ENCODE measurements at regions of chr5 and their contacts with region 1.

Region 1: DNA sequence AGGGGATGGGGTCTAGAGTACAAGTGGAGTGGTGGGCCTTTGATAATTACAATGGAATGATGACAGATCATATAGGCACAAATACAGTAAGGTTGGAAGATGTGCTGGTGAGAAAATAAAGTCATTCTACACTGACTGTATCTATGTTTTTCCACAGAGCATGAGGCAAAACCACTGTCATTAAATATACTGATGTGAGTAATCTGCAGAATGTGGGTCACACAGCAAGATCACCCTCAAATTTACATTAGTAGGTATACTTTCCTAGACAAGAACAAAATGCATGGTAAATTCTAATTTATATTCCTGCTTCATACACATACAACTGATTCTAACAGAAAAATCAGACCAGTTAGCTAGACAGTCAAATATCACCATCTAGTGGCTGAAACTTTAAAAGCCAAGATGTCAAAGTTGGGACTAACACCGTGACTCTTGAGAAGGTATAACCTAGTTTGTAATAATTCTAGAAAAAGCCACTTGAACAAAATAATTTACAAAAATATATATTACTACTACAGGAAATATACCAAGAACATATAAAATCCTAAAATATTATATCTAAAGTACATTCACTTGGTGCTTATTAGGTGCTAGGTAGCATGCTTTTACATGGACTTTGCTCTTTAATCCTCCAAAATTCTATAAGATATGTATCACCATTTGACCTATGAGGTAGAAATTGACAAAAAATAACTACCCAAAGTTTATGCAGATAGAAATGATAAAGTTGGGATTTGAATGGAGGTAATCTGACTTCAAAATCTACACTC is 19.5 kb downstream of the TTC33 start:
- DNase-seq: peak in 2 of 9 experiments; percentile 68 to 74
- ATAC-seq: peak; percentile 71
- H3K4me3 ChIP-seq: no peak overlapping the region
- H3K4me3 Mint-ChIP-seq: no peak overlapping the region
- H3K27ac ChIP-seq: no peak overlapping the region
- H3K27ac Mint-ChIP-seq: no peak overlapping the region
- H3K4me1 ChIP-seq: no peaks in the 10 kb centered on the region
- H3K4me1 Mint-ChIP-seq: peaks cover 23% of the 10 kb centered on the region
- H3K27me3 ChIP-seq: no peaks in the 10 kb centered on the region
- H3K27me3 Mint-ChIP-seq: no peaks in the 10 kb centered on the region
- CTCF ChIP-seq: peak; percentile 88

Region 2: GRCh38 chr5:39599721-39600431 is 1136.4 kb before region 1 on chr5:
- CTCF ChIA-PET with region 1: no interaction called
- POLR2A ChIA-PET with region 1: no interaction called
- intact Hi-C with region 1: loop called in 1 of 2 experiments (anchors 1 kb)
- DNase-seq: peak in 1 of 9 experiments; percentile 24
- ATAC-seq: no peak
- H3K4me3 ChIP-seq: no peak overlapping the region
- H3K4me3 Mint-ChIP-seq: no peak overlapping the region
- H3K27ac ChIP-seq: no peak overlapping the region
- H3K27ac Mint-ChIP-seq: no peak overlapping the region
- H3K4me1 ChIP-seq: no peaks in the 10 kb centered on the region
- H3K4me1 Mint-ChIP-seq: no peaks in the 10 kb centered on the region
- H3K27me3 ChIP-seq: no peaks in the 10 kb centered on the region
- H3K27me3 Mint-ChIP-seq: peaks cover 33% of the 10 kb centered on the region
- CTCF ChIP-seq: no peak

Region 3: GRCh38 chr5:39783756-39784421 is 952.4 kb before region 1 on chr5:
- CTCF ChIA-PET with region 1: no interaction called
- POLR2A ChIA-PET with region 1: no interaction called
- intact Hi-C with region 1: no loop called
- DNase-seq: no peak
- ATAC-seq: no peak
- H3K4me3 ChIP-seq: no peak overlapping the region
- H3K4me3 Mint-ChIP-seq: no peak overlapping the region
- H3K27ac ChIP-seq: no peak overlapping the region
- H3K27ac Mint-ChIP-seq: no peak overlapping the region
- H3K4me1 ChIP-seq: no peaks in the 10 kb centered on the region
- H3K4me1 Mint-ChIP-seq: no peaks in the 10 kb centered on the region
- H3K27me3 ChIP-seq: peaks cover 0 to 4% of the 10 kb centered on the region in 2 experiments
- H3K27me3 Mint-ChIP-seq: peaks cover 10% of the 10 kb centered on the region
- CTCF ChIP-seq: no peak

Region 4: DNA sequence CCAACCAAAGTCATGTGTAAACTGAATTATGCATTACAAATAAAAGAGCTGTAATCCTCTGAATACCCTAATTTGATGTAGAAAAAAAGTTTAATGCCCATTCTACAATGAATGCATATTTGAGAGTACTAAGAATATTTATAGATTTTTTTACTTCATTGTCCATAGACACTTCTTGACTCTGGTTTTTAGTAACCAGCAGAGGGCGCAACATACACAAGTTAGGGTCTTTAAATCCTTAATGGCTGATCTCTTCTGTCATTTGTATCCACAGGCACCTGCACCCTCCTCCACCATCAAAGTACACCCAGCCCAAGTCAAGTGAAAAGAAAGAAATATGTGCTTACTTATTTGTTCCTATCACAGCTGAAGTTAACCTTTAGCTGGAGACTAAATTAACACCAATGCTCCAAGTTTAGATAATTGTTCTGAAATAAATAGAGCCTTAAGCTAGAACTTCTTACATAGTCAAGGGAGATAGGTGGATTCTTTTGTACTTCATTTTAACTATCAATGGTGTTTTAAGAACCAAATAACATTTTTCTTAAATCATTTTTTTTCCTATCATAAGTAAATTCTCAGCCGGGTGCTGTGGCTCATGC is 787.3 kb before region 1 on chr5:
- CTCF ChIA-PET with region 1: interaction called, 21 read pairs
- POLR2A ChIA-PET with region 1: no interaction called
- intact Hi-C with region 1: loop called (anchors 1 kb)
- DNase-seq: peak; percentile 7 to 84 (median 63)
- ATAC-seq: peak; percentile 87
- H3K4me3 ChIP-seq: no peak overlapping the region
- H3K4me3 Mint-ChIP-seq: no peak overlapping the region
- H3K27ac ChIP-seq: no peak overlapping the region
- H3K27ac Mint-ChIP-seq: no peak overlapping the region
- H3K4me1 ChIP-seq: no peaks in the 10 kb centered on the region
- H3K4me1 Mint-ChIP-seq: peaks cover 2% of the 10 kb centered on the region
- H3K27me3 ChIP-seq: no peaks in the 10 kb centered on the region
- H3K27me3 Mint-ChIP-seq: no peaks in the 10 kb centered on the region
- CTCF ChIP-seq: peak; percentile 72

Region 5: DNA sequence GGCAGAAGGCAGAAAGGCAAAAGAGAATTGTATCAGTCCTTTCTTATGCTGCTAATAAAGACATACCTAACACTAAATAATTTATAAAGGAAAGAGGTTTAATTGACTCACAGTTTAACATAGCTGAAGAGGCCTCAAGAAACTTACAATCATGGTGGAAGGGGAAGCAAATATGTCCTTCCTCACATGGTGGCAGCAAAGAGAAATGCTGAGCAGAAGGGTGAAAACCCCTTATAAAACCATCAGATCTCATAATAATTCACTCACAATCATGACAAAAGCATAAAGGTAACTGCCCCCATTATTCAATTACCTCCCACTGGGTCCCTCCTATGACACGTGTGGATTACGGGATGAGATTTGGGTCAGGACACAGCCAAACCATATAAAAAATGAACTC is 369.0 kb before region 1 on chr5:
- CTCF ChIA-PET with region 1: no interaction called
- POLR2A ChIA-PET with region 1: interaction called, 3 read pairs
- intact Hi-C with region 1: loop called (anchors 5 kb)
- DNase-seq: peak in 4 of 9 experiments; percentile 26 to 72 (median 48)
- ATAC-seq: peak; percentile 66
- H3K4me3 ChIP-seq: no peak overlapping the region
- H3K4me3 Mint-ChIP-seq: no peak overlapping the region
- H3K27ac ChIP-seq: no peak overlapping the region
- H3K27ac Mint-ChIP-seq: peak overlapping the region; percentile 42
- H3K4me1 ChIP-seq: no peaks in the 10 kb centered on the region
- H3K4me1 Mint-ChIP-seq: peaks cover 6% of the 10 kb centered on the region
- H3K27me3 ChIP-seq: no peaks in the 10 kb centered on the region
- H3K27me3 Mint-ChIP-seq: no peaks in the 10 kb centered on the region
- CTCF ChIP-seq: peak; percentile 44

Region 6: DNA sequence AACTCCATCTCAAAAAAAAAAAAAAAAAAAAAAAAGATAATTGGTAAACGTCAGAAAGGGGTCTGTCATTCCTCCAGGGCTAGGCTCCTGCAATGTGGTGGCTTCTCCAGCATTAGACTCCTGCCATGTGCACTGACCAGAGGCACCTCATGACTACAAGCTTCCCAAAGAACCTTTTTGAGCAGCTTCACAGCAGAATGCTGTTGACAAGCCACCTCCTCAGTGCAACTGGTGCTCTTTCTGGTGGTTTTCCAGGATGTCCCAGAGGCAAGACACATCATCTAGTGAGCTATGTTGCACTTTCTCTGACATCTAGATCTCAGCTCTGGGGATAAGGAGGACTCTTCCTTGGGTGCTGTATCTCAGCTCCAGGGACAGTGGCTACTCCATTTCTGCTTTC is 87.2 kb after region 1 on chr5:
- CTCF ChIA-PET with region 1: no interaction called
- POLR2A ChIA-PET with region 1: no interaction called
- intact Hi-C with region 1: no loop called
- DNase-seq: no peak
- ATAC-seq: no peak
- H3K4me3 ChIP-seq: no peak overlapping the region
- H3K4me3 Mint-ChIP-seq: no peak overlapping the region
- H3K27ac ChIP-seq: no peak overlapping the region
- H3K27ac Mint-ChIP-seq: no peak overlapping the region
- H3K4me1 ChIP-seq: no peaks in the 10 kb centered on the region
- H3K4me1 Mint-ChIP-seq: peaks cover 5% of the 10 kb centered on the region
- H3K27me3 ChIP-seq: no peaks in the 10 kb centered on the region
- H3K27me3 Mint-ChIP-seq: no peaks in the 10 kb centered on the region
- CTCF ChIP-seq: no peak